ENCODE measurements at regions of chr17 and their contacts with region 1.

Region 1: DNA sequence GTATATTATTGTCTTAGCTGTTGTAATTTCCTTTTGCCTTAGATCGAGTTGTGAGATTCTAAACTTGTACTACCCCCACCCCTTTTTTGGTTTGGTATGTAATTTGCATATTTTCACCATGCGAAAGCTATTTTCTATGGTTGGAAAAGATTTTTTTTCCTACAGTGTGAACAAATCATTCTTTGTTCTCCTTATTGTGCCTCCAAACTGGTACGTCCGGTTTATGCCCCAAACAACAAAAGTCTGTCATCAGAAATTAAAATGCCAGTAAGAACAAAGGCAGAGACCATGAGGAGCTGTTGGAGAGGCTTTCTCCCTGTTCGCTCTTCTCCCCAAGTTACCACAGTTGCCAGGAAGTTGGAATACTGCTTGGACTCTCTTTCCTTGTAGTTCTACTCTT is 66.1 kb downstream of the BCAS3 start:
- DNase-seq: no peak
- CTCF ChIP-seq: no peak

Region 2: GRCh38 chr17:60971515-60972369 is 227.9 kb after region 1 on chr17:
- in situ Hi-C with region 1: loop called (anchors 25 kb)
- DNase-seq: peak; percentile 47
- CTCF ChIP-seq: peak; percentile 32

Region 3: DNA sequence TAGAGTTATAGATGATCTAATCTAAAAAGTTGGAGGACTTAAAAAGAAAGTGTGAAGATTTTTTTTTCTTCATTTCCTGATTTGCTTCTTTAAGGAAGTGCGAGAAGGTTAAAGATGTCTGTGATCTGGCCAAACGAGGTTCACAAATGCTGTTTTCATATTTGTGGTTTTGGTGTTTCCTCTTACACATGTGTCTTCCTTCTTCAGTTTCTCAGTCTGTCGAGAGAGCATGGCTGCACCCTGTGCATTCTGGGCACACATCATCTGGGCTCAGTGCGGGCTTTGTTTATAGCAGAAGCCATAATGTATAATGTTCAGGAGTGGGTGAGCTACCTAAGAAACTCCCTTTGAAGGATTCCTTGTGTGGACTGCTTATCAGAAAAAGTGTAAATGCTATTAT is 395.4 kb after region 1 on chr17:
- in situ Hi-C with region 1: no loop called
- DNase-seq: peak; percentile 69
- CTCF ChIP-seq: no peak

Measured in GM13976 (cell line).